ENCODE measurements at regions of chr1 and their contacts with region 1.

Region 1: DNA sequence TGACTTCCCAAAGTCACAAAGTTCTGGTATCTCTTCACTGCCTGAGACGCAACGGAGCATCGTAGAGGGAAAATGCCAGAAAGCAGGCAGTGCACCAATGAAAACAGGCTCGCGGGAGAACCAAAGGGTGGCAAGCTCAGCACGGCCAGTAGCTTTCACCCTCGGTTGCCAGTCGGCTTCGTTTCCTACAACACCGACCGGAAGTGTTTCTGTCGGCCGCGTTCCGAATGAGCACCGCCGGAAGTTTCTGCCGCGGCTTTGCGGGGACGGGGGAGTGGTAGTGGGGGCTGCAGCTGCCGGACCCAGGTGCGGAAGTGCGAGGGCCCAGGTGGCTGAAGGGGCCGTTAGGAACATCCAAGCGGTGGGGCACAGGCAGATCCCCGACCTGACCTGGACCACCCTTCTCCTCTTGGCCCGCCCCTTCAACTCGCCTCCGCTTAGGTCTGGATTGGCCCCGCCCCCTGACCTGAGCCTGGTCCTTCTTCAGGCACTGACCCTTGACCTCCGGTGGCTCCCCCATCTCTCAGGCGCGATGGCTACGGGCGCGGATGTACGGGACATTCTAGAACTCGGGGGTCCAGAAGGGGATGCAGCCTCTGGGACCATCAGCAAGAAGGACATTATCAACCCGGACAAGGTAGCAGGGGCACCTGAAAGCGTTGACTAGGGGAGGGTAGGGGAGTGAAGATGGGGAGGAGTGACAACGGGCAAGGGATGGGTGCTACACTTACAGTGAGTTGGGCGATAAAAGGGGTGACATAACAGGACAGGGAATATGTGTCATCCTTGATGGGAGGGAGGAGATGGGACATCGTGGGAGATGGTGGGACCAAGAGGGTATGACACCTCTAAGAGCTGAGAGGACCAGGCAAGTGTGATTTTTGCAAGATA is at the start of gene DMAP1:
- DNase-seq: peak; percentile 83
- ATAC-seq: peak; percentile 91
- H3K4me3 ChIP-seq: peak within 1 kb of the TSS; percentile 82
- H3K27ac ChIP-seq: peak within 1 kb of the TSS; percentile 75
- H3K4me1 ChIP-seq: peaks cover 3% of the 10 kb centered on the region
- H3K27me3 ChIP-seq: no peaks in the 10 kb centered on the region
- CTCF ChIP-seq: 0 out of 2 replicates have a peak, but pooled peaks have one; percentile 2
- POLR2A ChIP-seq: no peak
- RAD21 ChIP-seq: peak; percentile 39
- total RNA-seq, gene DMAP1: 18.1 and 22.2 TPM in 2 replicates

Region 2: DNA sequence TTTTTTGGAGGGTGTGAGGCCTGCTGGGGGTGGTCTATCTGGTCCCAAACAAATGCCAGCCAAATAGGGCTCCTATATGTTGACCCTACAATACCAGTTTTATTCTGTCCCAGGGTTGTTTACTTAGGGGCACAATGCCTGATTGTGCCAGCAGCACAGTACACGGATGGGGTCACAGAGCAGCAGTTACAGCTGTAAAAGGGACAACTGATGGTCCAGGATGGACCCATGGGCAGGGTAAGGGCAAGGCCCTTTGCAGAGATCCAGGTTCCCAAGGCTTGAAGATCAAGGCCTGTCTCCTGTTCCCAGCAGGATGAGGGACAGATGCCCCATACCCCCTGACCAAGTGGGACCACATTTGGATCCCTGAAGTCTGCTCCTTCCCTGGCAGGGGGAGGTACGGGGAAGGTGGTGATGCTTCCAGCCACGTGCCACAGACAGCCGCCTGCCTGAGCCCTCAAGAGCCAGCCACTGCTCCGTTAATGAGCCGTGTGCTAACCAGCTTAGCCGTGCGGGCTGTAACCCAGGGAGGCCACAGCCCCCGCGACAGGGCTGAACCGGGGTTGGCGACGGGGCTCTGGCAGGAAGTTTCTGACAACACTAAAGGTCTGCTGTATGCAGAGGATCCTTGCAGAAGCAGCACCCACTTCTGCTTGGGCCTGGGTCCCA is 200.4 kb before region 1 on chr1:
- CTCF ChIA-PET with region 1: no interaction called
- POLR2A ChIA-PET with region 1: no interaction called
- dilution Hi-C with region 1: no loop called
- in situ Hi-C with region 1: no loop called
- intact Hi-C with region 1: loop called (anchors 5 kb)
- DNase-seq: no peak
- ATAC-seq: no peak
- H3K4me3 ChIP-seq: no peak overlapping the region
- H3K27ac ChIP-seq: no peak overlapping the region
- H3K4me1 ChIP-seq: no peaks in the 10 kb centered on the region
- H3K27me3 ChIP-seq: no peaks in the 10 kb centered on the region
- CTCF ChIP-seq: no peak
- POLR2A ChIP-seq: no peak
- RAD21 ChIP-seq: no peak

Region 3: DNA sequence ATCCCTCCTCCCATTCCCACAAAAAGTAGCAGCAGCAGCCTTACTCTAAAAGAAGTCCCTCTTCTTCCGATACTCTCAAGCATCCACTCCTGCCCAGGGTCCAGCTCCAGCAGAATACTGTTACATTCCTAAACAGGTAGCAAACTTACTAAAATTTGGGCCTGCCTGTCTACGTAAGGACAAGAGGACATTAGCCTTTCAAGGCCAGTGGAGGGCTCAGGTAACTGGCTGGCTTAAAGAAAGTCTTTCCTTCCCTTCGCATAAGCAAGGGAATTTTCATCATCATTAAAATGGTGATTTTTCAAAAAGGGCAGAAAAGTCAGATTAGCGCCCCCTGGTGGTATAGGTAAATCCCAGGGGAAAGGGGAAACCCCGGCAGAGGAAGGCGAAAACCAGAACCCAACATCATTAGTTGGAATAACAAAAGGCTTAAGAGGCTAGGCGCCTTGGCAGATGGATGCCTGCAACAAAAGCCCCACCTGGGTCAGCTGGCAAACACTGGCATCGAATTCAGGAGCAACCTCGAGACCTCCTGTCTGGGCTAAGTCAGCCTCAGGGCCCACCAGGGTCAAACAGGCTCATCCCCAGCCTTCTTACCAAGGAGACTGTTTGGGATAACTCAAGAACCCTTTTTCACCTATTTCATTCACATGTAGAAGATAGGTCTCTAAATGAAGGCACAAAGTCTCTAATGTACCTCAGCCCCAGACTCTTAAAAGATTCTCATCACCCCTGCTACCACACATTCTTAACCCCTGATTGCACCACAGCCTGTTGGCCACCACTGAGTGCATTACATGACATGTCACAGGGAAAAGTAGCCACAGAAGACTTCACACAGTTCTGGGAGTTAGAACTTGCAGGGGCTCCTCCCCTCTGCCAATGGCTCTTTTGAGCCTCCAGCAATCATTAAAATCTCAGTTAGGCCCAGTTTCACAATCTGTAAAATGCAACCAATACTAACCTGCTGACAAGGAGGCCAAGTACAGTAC is 104.9 kb after region 1 on chr1:
- CTCF ChIA-PET with region 1: interaction called, 4 read pairs
- POLR2A ChIA-PET with region 1: no interaction called
- dilution Hi-C with region 1: no loop called
- in situ Hi-C with region 1: no loop called
- intact Hi-C with region 1: loop called (anchors 1 kb)
- DNase-seq: peak; percentile 23
- ATAC-seq: peak; percentile 68
- H3K4me3 ChIP-seq: no peak overlapping the region
- H3K27ac ChIP-seq: no peak overlapping the region
- H3K4me1 ChIP-seq: no peaks in the 10 kb centered on the region
- H3K27me3 ChIP-seq: no peaks in the 10 kb centered on the region
- CTCF ChIP-seq: peak; percentile 74
- POLR2A ChIP-seq: no peak
- RAD21 ChIP-seq: peak; percentile 56